Mammary epithelial cell (primary cell): ENCODE measurements at regions of chr11 and their contacts with region 1.

Region 1: GRCh38 chr11:10943968-10944367 is 86.1 kb upstream of the ZBED5 start:
- DNase-seq: no peak
- H3K4me3 ChIP-seq: no peak overlapping the region
- H3K27ac ChIP-seq: no peak overlapping the region
- H3K4me1 ChIP-seq: no peaks in the 10 kb centered on the region
- H3K27me3 ChIP-seq: no peaks in the 10 kb centered on the region
- CTCF ChIP-seq: no peak

Region 2: GRCh38 chr11:10973416-10973815 is 29.4 kb after region 1 on chr11:
- CTCF ChIA-PET with region 1: interaction called, 10 read pairs
- dilution Hi-C with region 1: no loop called
- in situ Hi-C with region 1: no loop called
- intact Hi-C with region 1: no loop called
- DNase-seq: no peak
- H3K4me3 ChIP-seq: no peak overlapping the region
- H3K27ac ChIP-seq: no peak overlapping the region
- H3K4me1 ChIP-seq: no peaks in the 10 kb centered on the region
- H3K27me3 ChIP-seq: no peaks in the 10 kb centered on the region
- CTCF ChIP-seq: no peak